ENCODE measurements at regions of chr3 and their contacts with region 1.

Region 1: DNA sequence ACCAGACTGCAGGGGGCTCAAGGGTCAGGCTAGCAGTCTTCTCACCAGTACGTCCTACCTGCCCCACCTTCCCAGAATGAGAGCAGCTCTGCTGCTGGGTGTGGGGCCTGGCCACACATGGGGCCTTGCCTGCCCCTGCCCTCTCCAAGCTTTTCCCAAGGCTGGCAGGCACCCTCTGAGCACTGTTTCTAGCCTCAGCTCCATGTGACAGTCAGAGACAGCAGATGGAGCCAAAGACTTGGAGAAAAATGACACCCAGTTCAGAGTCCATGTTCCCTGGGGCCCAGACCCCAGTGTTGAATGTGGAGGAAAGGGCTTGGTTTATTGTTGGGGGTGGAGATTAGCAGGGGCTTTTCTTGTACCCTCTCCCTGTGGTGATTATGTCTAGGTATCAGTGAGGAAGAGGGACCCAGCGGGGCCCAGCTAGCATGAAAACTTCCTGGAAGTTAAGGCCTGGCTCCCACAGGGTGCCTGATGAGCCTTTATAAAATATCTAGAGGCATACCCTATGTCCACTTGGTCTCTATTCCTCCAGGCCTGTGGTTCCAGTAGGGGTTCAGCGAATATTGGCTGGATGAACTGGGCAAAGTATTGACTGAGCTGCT is 153.8 kb downstream of the EEFSEC start:
- DNase-seq: peak; percentile 58
- H3K4me3 ChIP-seq: no peak overlapping the region
- H3K27ac ChIP-seq: peak overlapping the region in 1 of 2 experiments; percentile 67; a peak in 2 of 4 replicates
- H3K4me1 ChIP-seq: peaks cover 0 to 26% of the 10 kb centered on the region in 2 experiments; a peak in 2 of 4 replicates
- H3K27me3 ChIP-seq: no peaks in the 10 kb centered on the region
- CTCF ChIP-seq: no peak; the same call in 1 of the 2 replicates
- EP300 ChIP-seq: no peak
- RAD21 ChIP-seq: peak; percentile 89

Region 2: GRCh38 chr3:128236657-128237056 is 70.5 kb before region 1 on chr3:
- CTCF ChIA-PET with region 1: interaction called, 12 read pairs
- POLR2A ChIA-PET with region 1: interaction called, 3 read pairs
- DNase-seq: peak; percentile 45
- H3K4me3 ChIP-seq: no peak overlapping the region
- H3K27ac ChIP-seq: peak overlapping the region in 1 of 2 experiments; percentile 99; a peak in 3 of 4 replicates
- H3K4me1 ChIP-seq: peaks cover 11 to 84% of the 10 kb centered on the region in 2 experiments; a peak in 3 of 4 replicates
- H3K27me3 ChIP-seq: no peaks in the 10 kb centered on the region
- CTCF ChIP-seq: no peak
- EP300 ChIP-seq: no peak; a peak in 1 of 4 replicates
- RAD21 ChIP-seq: peak; percentile 16

Region 3: GRCh38 chr3:128322066-128323022 is 15.2 kb after region 1 on chr3:
- CTCF ChIA-PET with region 1: interaction called, 35 read pairs
- POLR2A ChIA-PET with region 1: no interaction called
- DNase-seq: no peak
- H3K4me3 ChIP-seq: no peak overlapping the region
- H3K27ac ChIP-seq: peak overlapping the region in 1 of 2 experiments; percentile 98; a peak in 1 of 4 replicates
- H3K4me1 ChIP-seq: peaks cover 0 to 90% of the 10 kb centered on the region in 2 experiments; a peak in 2 of 4 replicates
- H3K27me3 ChIP-seq: no peaks in the 10 kb centered on the region
- CTCF ChIP-seq: peak; percentile 53
- EP300 ChIP-seq: no peak
- RAD21 ChIP-seq: peak; percentile 62

Region 4: GRCh38 chr3:128482666-128483656 is 175.8 kb after region 1 on chr3:
- CTCF ChIA-PET with region 1: interaction called, 14 read pairs
- POLR2A ChIA-PET with region 1: interaction called, 4 read pairs
- DNase-seq: peak; percentile 63
- H3K4me3 ChIP-seq: peak overlapping the region; percentile 12 to 75
- H3K27ac ChIP-seq: peak overlapping the region; percentile 51 to 97
- H3K4me1 ChIP-seq: peaks cover 8 to 43% of the 10 kb centered on the region in 2 experiments
- H3K27me3 ChIP-seq: no peaks in the 10 kb centered on the region
- CTCF ChIP-seq: peak; percentile 38
- EP300 ChIP-seq: peak in 1 of 2 experiments; percentile 35; a peak in 1 of 4 replicates
- RAD21 ChIP-seq: no peak

Region 5: GRCh38 chr3:128607710-128608048 is 300.5 kb after region 1 on chr3:
- CTCF ChIA-PET with region 1: interaction called, 18 read pairs
- POLR2A ChIA-PET with region 1: no interaction called
- DNase-seq: no peak
- H3K4me3 ChIP-seq: no peak overlapping the region
- H3K27ac ChIP-seq: no peak overlapping the region
- H3K4me1 ChIP-seq: peaks cover 0 to 22% of the 10 kb centered on the region in 2 experiments; a peak in 1 of 4 replicates
- H3K27me3 ChIP-seq: no peaks in the 10 kb centered on the region
- CTCF ChIP-seq: no peak
- EP300 ChIP-seq: no peak
- RAD21 ChIP-seq: no peak

Measured in SK-N-SH (cell line).